Pancreas (tissue), 10 donors: ENCODE measurements at regions of chr17 and their contacts with region 1.

Region 1: DNA sequence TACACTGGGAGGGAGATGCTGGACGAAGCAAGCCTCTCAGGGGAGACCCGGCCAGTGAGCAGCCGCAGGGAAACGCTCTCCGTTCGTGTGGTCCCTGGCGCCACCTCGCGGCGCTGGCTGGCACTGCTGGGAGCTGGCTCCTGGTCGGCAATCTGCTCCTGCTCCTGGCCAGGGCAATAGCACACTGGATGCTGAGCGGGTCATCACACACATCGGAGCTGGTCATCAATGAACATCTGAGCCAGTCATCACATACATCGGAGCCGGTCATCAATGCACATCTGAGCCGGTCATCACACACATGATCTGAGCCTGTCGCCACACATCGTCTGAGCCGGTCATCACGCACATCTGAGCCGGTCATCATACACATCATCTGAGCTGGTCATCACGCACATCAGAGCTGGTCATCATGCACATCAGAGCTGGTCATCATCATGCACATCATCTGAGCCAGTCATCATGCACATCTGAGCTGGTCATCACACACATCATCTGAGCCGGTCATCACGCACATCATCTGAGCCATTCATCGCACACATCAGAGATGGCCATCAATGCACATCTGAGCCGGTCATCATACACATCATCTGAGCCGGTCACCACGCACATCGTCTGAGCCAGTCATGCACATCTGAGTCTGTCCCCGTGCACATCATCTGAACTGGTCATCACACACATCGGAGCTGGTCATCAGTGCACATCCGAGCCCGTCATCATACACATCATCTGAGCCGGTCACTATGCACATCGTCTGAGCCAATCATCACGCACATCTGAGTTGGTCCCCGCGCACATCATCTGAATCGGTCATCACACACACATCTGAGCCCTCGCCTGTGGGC is 217.3 kb downstream of the RBFOX3 start:
- DNase-seq: peak; percentile 59 to 97 (median 86)
- ATAC-seq: peak; percentile 78 to 90 (median 88)
- H3K4me3 ChIP-seq: no peak overlapping the region
- H3K27ac ChIP-seq: no peak overlapping the region
- H3K4me1 ChIP-seq: no peaks in the 10 kb centered on the region
- H3K27me3 ChIP-seq: peaks cover 0 to 42% (median 5%) of the 10 kb centered on the region in 4 donors
- CTCF ChIP-seq: peak; percentile 74 to 88 (median 84)

Region 2: GRCh38 chr17:79087428-79088143 is 306.0 kb before region 1 on chr17:
- intact Hi-C with region 1: loop called (anchors 2 to 5 kb)
- DNase-seq: peak in 5 of 6 donors; percentile 40 to 93 (median 82)
- ATAC-seq: peak; percentile 70 to 89 (median 82)
- H3K4me3 ChIP-seq: no peak overlapping the region
- H3K27ac ChIP-seq: no peak overlapping the region
- H3K4me1 ChIP-seq: no peaks in the 10 kb centered on the region
- H3K27me3 ChIP-seq: peaks cover 0 to 3% (median 0%) of the 10 kb centered on the region in 4 donors
- CTCF ChIP-seq: peak; percentile 90 to 93 (median 91)

Region 3: DNA sequence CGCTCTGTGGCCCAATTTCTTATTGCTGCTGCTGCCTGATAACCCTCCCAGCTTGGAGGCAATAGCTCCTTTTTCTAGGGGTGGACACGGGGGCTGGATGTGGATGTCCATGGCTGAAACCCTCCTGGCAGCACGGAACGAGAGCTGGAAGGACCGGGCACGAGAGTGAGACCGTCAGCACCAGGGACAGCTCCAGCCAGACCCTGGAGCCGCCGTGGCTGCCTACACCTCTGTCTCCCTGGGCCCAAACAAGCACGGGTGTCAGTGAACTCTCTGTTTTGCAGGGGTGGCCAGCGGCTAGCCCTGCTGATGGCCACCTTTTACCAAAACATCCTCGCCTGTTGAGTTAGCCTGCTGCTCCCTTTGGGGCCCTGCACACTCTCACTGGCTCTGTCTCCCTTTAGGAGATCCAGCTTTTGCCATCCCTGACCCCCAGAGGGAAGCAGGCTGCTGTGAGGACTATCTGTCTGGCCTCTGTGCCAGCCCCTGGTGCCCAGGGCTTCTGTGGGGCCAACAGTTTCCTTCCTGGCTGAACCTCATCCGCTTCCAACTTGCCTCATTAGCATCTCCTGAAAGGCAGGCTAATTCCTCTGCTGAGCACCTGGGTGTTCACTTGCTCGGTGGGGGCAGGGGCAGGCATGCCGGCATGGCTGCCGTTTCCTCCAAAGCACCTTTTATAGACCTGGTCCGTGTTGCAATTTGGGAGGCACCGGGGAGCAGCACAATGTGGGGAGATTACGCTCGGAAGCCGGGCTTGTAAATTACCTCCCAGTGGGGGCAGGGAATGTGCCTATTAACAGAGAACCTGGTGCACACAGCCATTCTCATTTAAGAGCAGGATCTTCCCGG is 200.9 kb before region 1 on chr17:
- intact Hi-C with region 1: loop called in 1 of 3 experiments (anchors 5 kb)
- DNase-seq: peak in 2 of 6 donors; percentile 29 to 72
- ATAC-seq: peak in 2 of 4 donors; percentile 71 to 85
- H3K4me3 ChIP-seq: no peak overlapping the region
- H3K27ac ChIP-seq: no peak overlapping the region
- H3K4me1 ChIP-seq: no peaks in the 10 kb centered on the region
- H3K27me3 ChIP-seq: peaks cover 0 to 9% (median 2%) of the 10 kb centered on the region in 4 donors
- CTCF ChIP-seq: no peak

Region 4: GRCh38 chr17:79707931-79708891 is 314.6 kb after region 1 on chr17:
- intact Hi-C with region 1: loop called in 1 of 3 experiments (anchors 10 kb)
- DNase-seq: peak in 4 of 6 donors; percentile 63 to 79 (median 66)
- ATAC-seq: peak; percentile 64 to 89 (median 74)
- H3K4me3 ChIP-seq: no peak overlapping the region
- H3K27ac ChIP-seq: no peak overlapping the region
- H3K4me1 ChIP-seq: no peaks in the 10 kb centered on the region
- H3K27me3 ChIP-seq: no peaks in the 10 kb centered on the region
- CTCF ChIP-seq: peak; percentile 46 to 76 (median 68)